Calu3 (cell line): ENCODE measurements at regions of chrX and their contacts with region 1.

Region 1: DNA sequence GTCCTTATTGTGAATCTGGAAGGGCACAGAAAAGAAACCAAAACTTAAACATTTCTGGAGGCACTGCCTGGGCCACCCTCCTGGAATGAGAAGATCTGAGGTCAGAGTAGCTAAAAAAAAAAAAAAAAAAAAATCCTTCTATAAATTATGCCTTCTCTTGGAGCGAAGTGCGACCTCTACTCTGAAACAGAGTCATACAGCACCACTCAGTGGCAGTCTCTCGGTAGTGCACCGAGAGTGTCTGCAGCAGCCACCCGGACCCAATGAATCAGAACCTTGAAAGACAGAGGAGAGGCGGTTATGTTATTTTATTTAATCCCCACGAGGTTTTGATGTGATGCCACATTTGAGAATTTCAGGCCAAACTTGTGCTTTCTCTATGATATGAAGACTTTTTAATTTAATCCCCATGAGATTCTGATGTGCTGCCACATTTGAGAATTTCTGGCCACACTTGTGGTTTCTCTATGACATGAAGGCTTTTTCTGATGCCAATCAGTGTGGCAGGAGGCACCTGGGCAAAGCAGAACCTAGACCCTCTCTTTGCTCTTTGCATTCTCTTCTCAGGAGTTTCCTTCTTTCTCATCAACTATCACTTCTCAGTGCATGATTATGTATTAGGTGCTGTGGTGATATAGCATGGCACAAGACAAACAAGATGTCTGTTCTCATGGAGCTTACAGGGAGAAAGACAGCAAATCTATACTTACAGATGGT is 5.6 kb upstream of the CT47C1 start:
- DNase-seq: peak; percentile 63
- H3K4me3 Mint-ChIP-seq: no peak overlapping the region
- H3K27ac Mint-ChIP-seq: no peak overlapping the region
- H3K4me1 Mint-ChIP-seq: no peaks in the 10 kb centered on the region
- H3K27me3 Mint-ChIP-seq: peaks cover 17% of the 10 kb centered on the region
- CTCF ChIP-seq: peak; percentile 25

Region 2: GRCh38 chrX:118839334-118839958 is 227.7 kb before region 1 on chrX:
- CTCF ChIA-PET with region 1: interaction called, 10 read pairs
- intact Hi-C with region 1: no loop called
- DNase-seq: peak; percentile 84
- H3K4me3 Mint-ChIP-seq: peak overlapping the region; percentile 67
- H3K27ac Mint-ChIP-seq: no peak overlapping the region
- H3K4me1 Mint-ChIP-seq: no peaks in the 10 kb centered on the region
- H3K27me3 Mint-ChIP-seq: no peaks in the 10 kb centered on the region
- CTCF ChIP-seq: peak; percentile 76

Region 3: DNA sequence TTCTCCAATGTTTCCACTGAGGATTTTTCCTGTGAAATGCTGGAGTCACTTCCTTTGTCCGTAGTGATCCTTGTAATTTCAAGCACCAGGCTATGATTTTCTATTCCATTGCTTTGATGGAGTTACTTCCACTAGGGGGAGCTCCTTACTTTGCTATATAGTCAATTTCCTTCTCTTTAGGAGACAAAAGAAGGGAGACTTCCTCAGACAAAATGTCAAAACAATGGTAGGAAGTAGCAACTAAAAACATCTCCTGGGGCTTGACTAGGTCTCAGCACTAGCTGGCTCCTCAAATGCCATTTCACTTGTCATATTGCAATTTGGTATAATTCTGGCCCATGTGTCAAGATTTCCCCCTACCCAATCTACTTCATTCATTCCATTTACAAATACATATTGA is 219.5 kb before region 1 on chrX:
- CTCF ChIA-PET with region 1: interaction called, 3 read pairs
- intact Hi-C with region 1: loop called (anchors 1 kb)
- DNase-seq: peak; percentile 24
- H3K4me3 Mint-ChIP-seq: no peak overlapping the region
- H3K27ac Mint-ChIP-seq: no peak overlapping the region
- H3K4me1 Mint-ChIP-seq: no peaks in the 10 kb centered on the region
- H3K27me3 Mint-ChIP-seq: peaks cover 19% of the 10 kb centered on the region
- CTCF ChIP-seq: peak; percentile 38

Region 4: GRCh38 chrX:119004920-119005524 is 62.2 kb before region 1 on chrX:
- CTCF ChIA-PET with region 1: no interaction called
- intact Hi-C with region 1: loop called (anchors 1 kb)
- DNase-seq: peak; percentile 62
- H3K4me3 Mint-ChIP-seq: no peak overlapping the region
- H3K27ac Mint-ChIP-seq: no peak overlapping the region
- H3K4me1 Mint-ChIP-seq: no peaks in the 10 kb centered on the region
- H3K27me3 Mint-ChIP-seq: no peaks in the 10 kb centered on the region
- CTCF ChIP-seq: peak; percentile 55